Calu3 (cell line): ENCODE measurements at regions of chr2 and their contacts with region 1.

Region 1: GRCh38 chr2:118855451-118856279 is 8.2 kb upstream of the EN1 start:
- DNase-seq: peak; percentile 93
- H3K4me3 Mint-ChIP-seq: peak overlapping the region; percentile 72
- H3K27ac Mint-ChIP-seq: no peak overlapping the region
- H3K4me1 Mint-ChIP-seq: no peaks in the 10 kb centered on the region
- H3K27me3 Mint-ChIP-seq: peaks cover 12% of the 10 kb centered on the region
- CTCF ChIP-seq: peak; percentile 91

Region 2: GRCh38 chr2:118668431-118669424 is 186.9 kb before region 1 on chr2:
- CTCF ChIA-PET with region 1: no interaction called
- intact Hi-C with region 1: no loop called
- DNase-seq: peak; percentile 25
- H3K4me3 Mint-ChIP-seq: peak overlapping the region; percentile 40
- H3K27ac Mint-ChIP-seq: peak overlapping the region; percentile 56
- H3K4me1 Mint-ChIP-seq: peaks cover 31% of the 10 kb centered on the region
- H3K27me3 Mint-ChIP-seq: no peaks in the 10 kb centered on the region
- CTCF ChIP-seq: no peak

Region 3: GRCh38 chr2:118763797-118764196 is 91.9 kb before region 1 on chr2:
- CTCF ChIA-PET with region 1: no interaction called
- intact Hi-C with region 1: loop called (anchors 5 kb)
- DNase-seq: no peak
- H3K4me3 Mint-ChIP-seq: no peak overlapping the region
- H3K27ac Mint-ChIP-seq: no peak overlapping the region
- H3K4me1 Mint-ChIP-seq: no peaks in the 10 kb centered on the region
- H3K27me3 Mint-ChIP-seq: no peaks in the 10 kb centered on the region
- CTCF ChIP-seq: no peak

Region 4: DNA sequence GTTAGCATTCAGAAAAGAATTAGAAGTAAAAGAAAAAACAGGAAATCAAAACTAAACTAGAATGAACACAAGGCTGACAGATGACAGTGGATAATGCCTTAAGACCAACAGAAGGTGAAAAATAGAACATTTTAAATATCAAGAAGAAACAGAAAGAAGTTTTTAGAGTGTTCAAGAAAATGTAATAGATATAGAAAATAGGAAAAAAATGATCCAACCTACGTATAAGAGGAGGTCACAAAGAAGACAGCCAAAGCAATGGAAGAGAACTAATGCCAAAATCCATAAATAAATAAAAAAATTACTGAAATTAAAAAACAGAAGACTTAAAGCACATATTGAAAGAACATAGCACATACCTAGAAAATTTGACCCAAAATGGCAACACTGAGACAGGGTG is 34.3 kb after region 1 on chr2:
- CTCF ChIA-PET with region 1: no interaction called
- intact Hi-C with region 1: no loop called
- DNase-seq: no peak
- H3K4me3 Mint-ChIP-seq: no peak overlapping the region
- H3K27ac Mint-ChIP-seq: no peak overlapping the region
- H3K4me1 Mint-ChIP-seq: no peaks in the 10 kb centered on the region
- H3K27me3 Mint-ChIP-seq: peaks cover 68% of the 10 kb centered on the region
- CTCF ChIP-seq: no peak

Region 5: DNA sequence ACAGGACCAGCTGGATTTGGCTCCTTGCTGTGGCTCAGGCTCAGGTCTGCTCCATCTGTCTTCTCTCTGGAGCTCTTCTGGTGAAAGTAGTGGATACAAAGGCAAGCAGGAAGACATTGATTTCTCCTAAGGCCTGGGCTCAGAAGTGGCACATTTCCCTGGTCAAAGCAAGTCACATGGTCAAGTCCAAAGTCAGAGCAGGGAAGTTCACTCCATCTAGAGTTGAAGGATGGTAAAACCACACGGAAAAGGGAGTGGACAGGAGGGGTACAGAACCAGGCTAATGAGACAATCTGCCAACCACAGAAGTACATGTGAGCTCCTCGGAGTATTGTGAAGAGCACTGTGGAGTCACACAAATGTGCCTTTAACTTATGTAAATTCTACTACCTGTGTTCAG is 152.4 kb after region 1 on chr2:
- CTCF ChIA-PET with region 1: no interaction called
- intact Hi-C with region 1: no loop called
- DNase-seq: no peak
- H3K4me3 Mint-ChIP-seq: no peak overlapping the region
- H3K27ac Mint-ChIP-seq: no peak overlapping the region
- H3K4me1 Mint-ChIP-seq: no peaks in the 10 kb centered on the region
- H3K27me3 Mint-ChIP-seq: peaks cover 75% of the 10 kb centered on the region
- CTCF ChIP-seq: no peak

Region 6: GRCh38 chr2:119290859-119291587 is 435.4 kb after region 1 on chr2:
- CTCF ChIA-PET with region 1: no interaction called
- intact Hi-C with region 1: no loop called
- DNase-seq: peak; percentile 80
- H3K4me3 Mint-ChIP-seq: no peak overlapping the region
- H3K27ac Mint-ChIP-seq: no peak overlapping the region
- H3K4me1 Mint-ChIP-seq: no peaks in the 10 kb centered on the region
- H3K27me3 Mint-ChIP-seq: no peaks in the 10 kb centered on the region
- CTCF ChIP-seq: peak; percentile 64